ENCODE measurements at regions of chr3 and their contacts with region 1.

Region 1: DNA sequence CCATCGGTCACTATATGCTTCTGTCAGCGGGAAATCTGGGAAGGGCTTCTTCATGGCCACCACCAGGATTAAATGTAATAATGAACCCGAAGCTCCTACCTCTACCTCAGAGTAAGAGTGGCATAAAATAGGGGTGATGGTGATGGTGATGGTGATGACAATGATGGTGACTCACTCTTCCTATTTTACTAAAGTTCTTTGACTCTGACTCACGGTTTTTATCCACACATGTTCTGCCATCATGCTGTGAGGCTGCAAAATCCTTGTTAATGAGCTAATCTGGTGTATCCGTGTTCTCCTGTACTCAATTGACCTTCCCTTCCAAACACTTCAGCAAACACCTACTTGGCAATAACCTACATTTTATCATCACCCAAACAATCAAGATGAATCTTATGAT is 18.3 kb upstream of the FOXP1 start:
- DNase-seq: no peak
- H3K4me3 ChIP-seq: no peak overlapping the region
- H3K27ac ChIP-seq: no peak overlapping the region
- H3K4me1 ChIP-seq: peaks cover 0 to 2% of the 10 kb centered on the region in 2 donors
- H3K27me3 ChIP-seq: no peaks in the 10 kb centered on the region
- CTCF ChIP-seq: no peak

Region 2: DNA sequence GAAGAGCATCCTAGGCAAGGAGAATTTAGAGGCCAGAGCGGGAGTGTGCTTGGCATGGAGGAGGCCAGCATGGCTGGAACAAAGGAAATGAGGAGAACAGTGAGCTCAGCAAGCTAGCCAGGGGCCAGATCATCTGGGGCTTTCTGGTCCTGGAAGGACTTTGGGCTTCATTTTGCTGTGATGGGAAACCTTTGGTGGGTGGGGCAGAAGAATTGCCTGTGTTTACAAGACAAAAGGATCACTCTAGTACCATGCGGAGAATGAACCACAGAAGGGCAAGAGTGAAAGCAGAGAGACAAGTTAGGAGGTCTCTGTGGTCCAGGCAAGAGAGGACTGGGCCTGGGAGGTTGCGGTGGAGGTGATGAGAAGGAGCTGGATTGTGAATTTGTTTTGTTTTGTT is 43.3 kb after region 1 on chr3:
- intact Hi-C with region 1: loop called (anchors 2 kb)
- DNase-seq: no peak
- H3K4me3 ChIP-seq: no peak overlapping the region
- H3K27ac ChIP-seq: no peak overlapping the region
- H3K4me1 ChIP-seq: no peaks in the 10 kb centered on the region
- H3K27me3 ChIP-seq: no peaks in the 10 kb centered on the region
- CTCF ChIP-seq: no peak

Region 3: GRCh38 chr3:72152551-72153476 is 551.0 kb after region 1 on chr3:
- intact Hi-C with region 1: no loop called
- DNase-seq: peak in 1 of 2 donors; percentile 84
- H3K4me3 ChIP-seq: peak overlapping the region; percentile 41 to 44
- H3K27ac ChIP-seq: peak overlapping the region in 1 of 2 donors; percentile 69
- H3K4me1 ChIP-seq: peaks cover 4 to 27% of the 10 kb centered on the region in 2 donors
- H3K27me3 ChIP-seq: no peaks in the 10 kb centered on the region
- CTCF ChIP-seq: no peak

Measured in ascending aorta (tissue), 2 donors.